PC-9 (cell line): ENCODE measurements at regions of chr4 and their contacts with region 1.

Region 1: GRCh38 chr4:6673660-6674499 is 19.8 kb upstream of the S100P start:
- DNase-seq: peak; percentile 82 to 89
- H3K4me3 ChIP-seq: peak overlapping the region; percentile 62
- H3K27ac ChIP-seq: peak overlapping the region; percentile 76
- H3K4me1 ChIP-seq: peaks cover 24% of the 10 kb centered on the region
- H3K27me3 ChIP-seq: no peaks in the 10 kb centered on the region
- CTCF ChIP-seq: no peak

Region 2: GRCh38 chr4:6437826-6438238 is 236.0 kb before region 1 on chr4:
- CTCF ChIA-PET with region 1: no interaction called
- POLR2A ChIA-PET with region 1: interaction called, 18 read pairs
- intact Hi-C with region 1: no loop called
- DNase-seq: no peak
- H3K4me3 ChIP-seq: no peak overlapping the region
- H3K27ac ChIP-seq: no peak overlapping the region
- H3K4me1 ChIP-seq: no peaks in the 10 kb centered on the region
- H3K27me3 ChIP-seq: no peaks in the 10 kb centered on the region
- CTCF ChIP-seq: no peak

Region 3: DNA sequence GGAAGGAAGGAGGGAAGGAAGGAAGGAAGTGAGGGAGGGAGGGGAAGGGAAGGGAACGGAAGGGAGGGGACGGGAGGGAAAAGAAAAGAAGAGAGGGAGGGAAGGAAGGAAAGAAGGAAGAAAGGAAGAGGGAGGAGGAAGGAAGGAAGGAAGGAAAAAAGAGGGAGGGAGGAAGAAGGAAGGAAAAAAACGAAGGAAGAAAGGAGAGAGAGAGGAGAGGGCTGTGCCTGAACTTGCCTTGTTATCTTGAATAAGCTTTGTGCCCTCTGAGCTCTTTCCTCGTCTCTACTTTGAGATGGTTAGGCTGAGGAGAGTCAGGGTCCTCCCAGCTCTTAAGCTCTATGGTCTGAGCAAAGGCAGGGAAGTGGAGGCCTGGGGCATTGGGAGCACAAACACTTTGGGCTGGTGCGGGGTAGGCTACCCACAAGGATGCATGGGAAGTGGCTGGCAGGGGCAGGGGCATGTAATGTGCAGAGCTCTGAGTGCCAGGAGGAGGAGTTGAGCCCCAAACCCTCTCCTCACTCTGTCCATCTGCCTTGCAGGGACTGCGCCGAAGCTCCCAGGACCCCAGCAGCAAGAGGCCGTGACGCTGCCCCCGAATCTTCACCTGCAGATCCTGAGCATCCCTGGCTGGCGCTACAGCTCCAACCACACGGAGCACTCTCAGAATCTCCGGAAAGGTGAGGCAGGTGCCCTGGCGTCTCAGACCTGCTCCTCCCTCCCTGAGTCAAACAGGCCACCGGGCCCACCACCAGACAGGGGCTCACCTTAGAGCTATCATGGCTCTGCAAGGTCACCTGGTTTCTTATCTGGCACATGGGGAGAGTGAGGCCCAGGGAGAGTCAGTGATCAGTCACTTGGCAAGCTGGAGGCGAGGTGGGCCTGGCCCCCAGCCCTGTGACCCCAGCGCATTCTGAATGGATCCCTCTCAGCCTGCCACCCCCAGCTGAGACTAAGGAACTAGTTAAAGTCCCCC is 59.9 kb before region 1 on chr4:
- CTCF ChIA-PET with region 1: no interaction called
- POLR2A ChIA-PET with region 1: interaction called, 21 read pairs
- intact Hi-C with region 1: no loop called
- DNase-seq: no peak
- H3K4me3 ChIP-seq: no peak overlapping the region
- H3K27ac ChIP-seq: no peak overlapping the region
- H3K4me1 ChIP-seq: no peaks in the 10 kb centered on the region
- H3K27me3 ChIP-seq: no peaks in the 10 kb centered on the region
- CTCF ChIP-seq: no peak

Region 4: GRCh38 chr4:6640292-6641163 is 33.4 kb before region 1 on chr4 and contains the start of gene MRFAP1:
- CTCF ChIA-PET with region 1: no interaction called
- POLR2A ChIA-PET with region 1: interaction called, 11 read pairs
- intact Hi-C with region 1: no loop called
- DNase-seq: peak; percentile 83 to 91
- H3K4me3 ChIP-seq: peak within 1 kb of the TSS; percentile 78
- H3K27ac ChIP-seq: peak within 1 kb of the TSS; percentile 80
- H3K4me1 ChIP-seq: peaks cover 12% of the 10 kb centered on the region
- H3K27me3 ChIP-seq: no peaks in the 10 kb centered on the region
- CTCF ChIP-seq: no peak
- total RNA-seq, gene MRFAP1: 278 and 291 TPM in 2 replicates

Region 5: DNA sequence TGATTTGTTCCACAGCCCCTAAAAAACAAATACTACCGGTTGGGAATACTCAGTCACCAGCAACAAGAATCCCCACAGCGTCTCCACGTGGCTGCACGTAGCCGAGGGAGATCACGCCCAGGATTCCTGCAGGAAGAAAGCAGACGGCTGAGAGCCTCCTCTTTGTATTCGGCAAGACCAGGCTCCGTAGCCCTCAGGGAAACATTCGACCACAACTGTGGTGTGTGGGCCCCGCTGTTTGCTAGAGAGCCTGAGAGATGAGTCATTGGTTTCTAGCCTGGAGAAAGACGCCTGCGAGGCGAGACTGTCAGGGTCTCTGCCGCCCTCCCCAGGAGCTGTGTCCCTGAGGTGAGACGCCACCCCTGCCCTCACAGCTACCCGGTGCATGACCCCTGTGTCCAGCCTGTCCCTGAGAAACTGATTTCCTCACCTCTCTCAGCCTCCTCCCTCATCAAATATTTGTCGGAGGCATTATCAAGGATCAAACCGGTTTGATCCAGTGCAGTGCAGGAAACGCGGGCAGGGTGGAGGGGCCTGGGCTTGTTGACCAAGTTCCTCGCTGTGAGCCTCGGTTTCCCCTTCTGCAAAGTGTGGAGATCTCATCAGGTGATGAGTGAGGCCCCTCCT is 15.1 kb after region 1 on chr4:
- CTCF ChIA-PET with region 1: interaction called, 11 read pairs
- POLR2A ChIA-PET with region 1: interaction called, 28 read pairs
- intact Hi-C with region 1: loop called (anchors 2 kb)
- DNase-seq: peak; percentile 94 to 98
- H3K4me3 ChIP-seq: peak overlapping the region; percentile 46; the same call in 1 of the 2 replicates
- H3K27ac ChIP-seq: peak overlapping the region; percentile 100
- H3K4me1 ChIP-seq: peaks cover 56% of the 10 kb centered on the region
- H3K27me3 ChIP-seq: no peaks in the 10 kb centered on the region
- CTCF ChIP-seq: no peak

Region 6: DNA sequence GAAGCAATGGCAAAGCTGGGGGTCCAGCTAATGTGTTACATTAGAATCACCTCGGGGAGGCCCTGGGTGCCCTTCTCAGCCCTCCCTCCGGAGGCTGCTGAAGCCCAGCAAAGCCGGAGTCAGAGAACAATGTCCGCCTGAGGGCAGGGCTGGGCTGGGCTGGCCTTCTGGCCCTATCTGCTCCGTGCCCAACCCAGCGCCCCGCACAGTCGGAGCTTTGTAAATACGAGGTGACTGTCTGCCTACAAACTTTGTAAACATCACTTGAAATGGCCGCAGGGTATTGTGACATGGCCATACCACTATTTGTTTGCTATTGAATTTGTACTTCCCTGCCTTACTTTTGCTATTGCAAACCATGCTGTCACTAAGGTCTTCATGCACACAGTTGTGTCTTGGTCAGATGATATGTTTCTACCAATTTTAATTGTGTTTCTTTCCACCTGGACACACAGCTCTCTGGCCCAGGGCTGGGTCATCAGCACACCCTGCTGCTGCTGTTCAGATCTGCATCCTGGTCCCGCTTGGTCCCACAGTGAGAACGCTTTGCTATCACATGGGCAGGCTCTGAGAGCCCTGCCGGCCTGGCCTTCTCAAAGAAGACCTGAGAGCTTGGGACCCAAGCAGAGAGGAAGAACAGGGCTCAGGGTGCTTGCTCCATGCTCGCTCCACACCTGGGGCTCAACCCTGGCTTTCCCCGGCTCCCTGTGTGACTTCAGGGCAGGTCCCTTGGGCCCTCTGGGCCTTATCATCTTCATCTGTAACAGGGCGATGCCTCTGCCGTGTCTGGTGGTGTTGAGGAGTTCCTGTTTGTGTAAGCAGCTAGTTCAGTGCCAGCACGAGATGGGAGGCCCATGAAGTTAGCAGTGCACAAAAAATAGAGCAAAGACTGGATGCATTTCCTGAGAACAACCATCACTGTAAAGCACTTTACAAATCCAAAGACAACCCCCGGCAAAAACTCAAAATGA is 22.1 kb after region 1 on chr4:
- CTCF ChIA-PET with region 1: interaction called, 5 read pairs
- POLR2A ChIA-PET with region 1: interaction called, 28 read pairs
- intact Hi-C with region 1: no loop called
- DNase-seq: peak; percentile 84 to 95
- H3K4me3 ChIP-seq: peak overlapping the region; percentile 86
- H3K27ac ChIP-seq: peak overlapping the region; percentile 100
- H3K4me1 ChIP-seq: peaks cover 37% of the 10 kb centered on the region
- H3K27me3 ChIP-seq: no peaks in the 10 kb centered on the region
- CTCF ChIP-seq: no peak; the same call in 1 of the 2 replicates

Region 7: GRCh38 chr4:6732441-6733357 is 58.8 kb after region 1 on chr4:
- CTCF ChIA-PET with region 1: no interaction called
- POLR2A ChIA-PET with region 1: no interaction called
- intact Hi-C with region 1: no loop called
- DNase-seq: peak; percentile 84 to 89
- H3K4me3 ChIP-seq: peak overlapping the region; percentile 44; the same call in 1 of the 2 replicates
- H3K27ac ChIP-seq: peak overlapping the region; percentile 100
- H3K4me1 ChIP-seq: peaks cover 25% of the 10 kb centered on the region
- H3K27me3 ChIP-seq: no peaks in the 10 kb centered on the region
- CTCF ChIP-seq: no peak